Activated B cell treated with CpG ODN at 0.5 μM for 24 hours (primary cell): ENCODE measurements at regions of chr6 and their contacts with region 1.

Region 1: GRCh38 chr6:7238900-7239589 is 74.0 kb downstream of the SSR1 start:
- DNase-seq: peak; percentile 71
- ATAC-seq: peak; percentile 92
- H3K4me3 Mint-ChIP-seq: no peak overlapping the region
- H3K27ac Mint-ChIP-seq: peak overlapping the region; percentile 65
- H3K4me1 Mint-ChIP-seq: peaks cover 56% of the 10 kb centered on the region
- H3K27me3 Mint-ChIP-seq: no peaks in the 10 kb centered on the region
- CTCF ChIP-seq: no peak

Region 2: GRCh38 chr6:6556738-6557505 is 682.1 kb before region 1 on chr6:
- CTCF ChIA-PET with region 1: no interaction called
- POLR2A ChIA-PET with region 1: no interaction called
- intact Hi-C with region 1: loop called (anchors 2 kb)
- DNase-seq: peak; percentile 28
- ATAC-seq: peak; percentile 81
- H3K4me3 Mint-ChIP-seq: no peak overlapping the region
- H3K27ac Mint-ChIP-seq: no peak overlapping the region
- H3K4me1 Mint-ChIP-seq: peaks cover 3% of the 10 kb centered on the region
- H3K27me3 Mint-ChIP-seq: no peaks in the 10 kb centered on the region
- CTCF ChIP-seq: peak; percentile 83

Region 3: GRCh38 chr6:6724539-6725467 is 514.2 kb before region 1 on chr6:
- CTCF ChIA-PET with region 1: interaction called, 42 read pairs
- POLR2A ChIA-PET with region 1: no interaction called
- intact Hi-C with region 1: loop called (anchors 1 kb)
- DNase-seq: peak; percentile 40
- ATAC-seq: peak; percentile 84
- H3K4me3 Mint-ChIP-seq: peak overlapping the region; percentile 65
- H3K27ac Mint-ChIP-seq: no peak overlapping the region
- H3K4me1 Mint-ChIP-seq: peaks cover 8% of the 10 kb centered on the region
- H3K27me3 Mint-ChIP-seq: peaks cover 23% of the 10 kb centered on the region
- CTCF ChIP-seq: no peak

Region 4: GRCh38 chr6:6788394-6789020 is 450.5 kb before region 1 on chr6:
- CTCF ChIA-PET with region 1: interaction called, 17 read pairs
- POLR2A ChIA-PET with region 1: no interaction called
- intact Hi-C with region 1: loop called (anchors 1 kb)
- DNase-seq: no peak
- ATAC-seq: peak; percentile 90
- H3K4me3 Mint-ChIP-seq: no peak overlapping the region
- H3K27ac Mint-ChIP-seq: no peak overlapping the region
- H3K4me1 Mint-ChIP-seq: no peaks in the 10 kb centered on the region
- H3K27me3 Mint-ChIP-seq: no peaks in the 10 kb centered on the region
- CTCF ChIP-seq: no peak

Region 5: GRCh38 chr6:6901205-6901731 is 337.8 kb before region 1 on chr6:
- CTCF ChIA-PET with region 1: interaction called, 3 read pairs
- POLR2A ChIA-PET with region 1: no interaction called
- intact Hi-C with region 1: loop called (anchors 5 kb)
- DNase-seq: no peak
- ATAC-seq: peak; percentile 10
- H3K4me3 Mint-ChIP-seq: no peak overlapping the region
- H3K27ac Mint-ChIP-seq: no peak overlapping the region
- H3K4me1 Mint-ChIP-seq: no peaks in the 10 kb centered on the region
- H3K27me3 Mint-ChIP-seq: peaks cover 5% of the 10 kb centered on the region
- CTCF ChIP-seq: no peak

Region 6: GRCh38 chr6:7086488-7086887 is 152.6 kb before region 1 on chr6:
- CTCF ChIA-PET with region 1: interaction called, 7 read pairs
- POLR2A ChIA-PET with region 1: no interaction called
- intact Hi-C with region 1: loop called (anchors 2 kb)
- DNase-seq: peak; percentile 35
- ATAC-seq: peak; percentile 87
- H3K4me3 Mint-ChIP-seq: peak overlapping the region; percentile 83
- H3K27ac Mint-ChIP-seq: peak overlapping the region; percentile 89
- H3K4me1 Mint-ChIP-seq: peaks cover 30% of the 10 kb centered on the region
- H3K27me3 Mint-ChIP-seq: no peaks in the 10 kb centered on the region
- CTCF ChIP-seq: no peak

Region 7: GRCh38 chr6:7201688-7202541 is 37.1 kb before region 1 on chr6:
- CTCF ChIA-PET with region 1: no interaction called
- POLR2A ChIA-PET with region 1: interaction called, 3 read pairs
- intact Hi-C with region 1: loop called (anchors 5 kb)
- DNase-seq: peak; percentile 65
- ATAC-seq: peak; percentile 94
- H3K4me3 Mint-ChIP-seq: peak overlapping the region; percentile 50
- H3K27ac Mint-ChIP-seq: peak overlapping the region; percentile 74
- H3K4me1 Mint-ChIP-seq: peaks cover 56% of the 10 kb centered on the region
- H3K27me3 Mint-ChIP-seq: no peaks in the 10 kb centered on the region
- CTCF ChIP-seq: no peak